ENCODE measurements at regions of chr5 and their contacts with region 1.

Region 1: GRCh38 chr5:72096602-72097188 is 10.6 kb upstream of the MAP1B start:
- DNase-seq: no peak
- ATAC-seq: no peak
- H3K4me3 ChIP-seq: no peak overlapping the region
- H3K27ac ChIP-seq: no peak overlapping the region
- H3K4me1 ChIP-seq: no peaks in the 10 kb centered on the region
- H3K27me3 ChIP-seq: no peaks in the 10 kb centered on the region
- CTCF ChIP-seq: no peak
- POLR2A ChIP-seq: no peak

Region 2: GRCh38 chr5:72121780-72122445 is 25.2 kb after region 1 on chr5:
- in situ Hi-C with region 1: no loop called
- intact Hi-C with region 1: no loop called
- DNase-seq: no peak
- ATAC-seq: no peak
- H3K4me3 ChIP-seq: no peak overlapping the region
- H3K27ac ChIP-seq: no peak overlapping the region
- H3K4me1 ChIP-seq: peaks cover 0 to 2% of the 10 kb centered on the region in 2 donors
- H3K27me3 ChIP-seq: no peaks in the 10 kb centered on the region
- CTCF ChIP-seq: no peak
- POLR2A ChIP-seq: no peak

Region 3: DNA sequence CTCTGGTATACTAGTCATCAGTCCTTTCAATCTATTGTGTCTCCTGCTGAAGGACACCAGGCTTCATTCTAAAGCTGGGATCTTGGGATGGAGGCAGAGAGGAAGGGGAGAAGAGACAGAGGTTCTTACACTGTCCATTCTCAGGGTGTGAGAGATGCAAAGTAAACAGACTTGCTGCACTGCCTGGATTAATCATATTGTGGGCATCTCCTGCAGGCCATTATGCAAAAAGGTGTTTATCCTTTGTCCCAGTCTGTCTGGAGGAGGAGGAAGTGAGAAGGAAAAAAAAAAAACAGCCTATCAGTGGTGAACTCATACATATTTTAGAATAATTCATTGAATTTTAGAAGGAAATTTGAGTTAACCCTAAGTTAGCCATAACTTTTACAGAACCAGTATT is 626.9 kb after region 1 on chr5:
- in situ Hi-C with region 1: no loop called
- intact Hi-C with region 1: loop called (anchors 5 kb)
- DNase-seq: no peak
- ATAC-seq: no peak
- H3K4me3 ChIP-seq: no peak overlapping the region
- H3K27ac ChIP-seq: no peak overlapping the region
- H3K4me1 ChIP-seq: no peaks in the 10 kb centered on the region
- H3K27me3 ChIP-seq: no peaks in the 10 kb centered on the region
- CTCF ChIP-seq: no peak
- POLR2A ChIP-seq: no peak

Measured in gastrocnemius medialis (tissue), 4 donors.